HEK293T (cell line): ENCODE measurements at regions of chr2 and their contacts with region 1.

Region 1: GRCh38 chr2:70871398-70872211 is 36.0 kb upstream of the CD207 start:
- DNase-seq: peak; percentile 91

Region 2: GRCh38 chr2:70851704-70852103 is 19.9 kb before region 1 on chr2:
- CTCF ChIA-PET with region 1: no interaction called
- POLR2A ChIA-PET with region 1: no interaction called
- DNase-seq: no peak

Region 3: GRCh38 chr2:70919672-70920366 is 48.2 kb after region 1 on chr2:
- CTCF ChIA-PET with region 1: interaction called, 23 read pairs
- POLR2A ChIA-PET with region 1: interaction called, 3 read pairs
- DNase-seq: peak; percentile 86

Region 4: GRCh38 chr2:70948337-70949003 is 76.9 kb after region 1 on chr2:
- CTCF ChIA-PET with region 1: interaction called, 30 read pairs
- POLR2A ChIA-PET with region 1: interaction called, 3 read pairs
- DNase-seq: peak; percentile 88